Activated B cell treated with CpG ODN at 0.5 μM for 24 hours (primary cell): ENCODE measurements at regions of chr18 and their contacts with region 1.

Region 1: DNA sequence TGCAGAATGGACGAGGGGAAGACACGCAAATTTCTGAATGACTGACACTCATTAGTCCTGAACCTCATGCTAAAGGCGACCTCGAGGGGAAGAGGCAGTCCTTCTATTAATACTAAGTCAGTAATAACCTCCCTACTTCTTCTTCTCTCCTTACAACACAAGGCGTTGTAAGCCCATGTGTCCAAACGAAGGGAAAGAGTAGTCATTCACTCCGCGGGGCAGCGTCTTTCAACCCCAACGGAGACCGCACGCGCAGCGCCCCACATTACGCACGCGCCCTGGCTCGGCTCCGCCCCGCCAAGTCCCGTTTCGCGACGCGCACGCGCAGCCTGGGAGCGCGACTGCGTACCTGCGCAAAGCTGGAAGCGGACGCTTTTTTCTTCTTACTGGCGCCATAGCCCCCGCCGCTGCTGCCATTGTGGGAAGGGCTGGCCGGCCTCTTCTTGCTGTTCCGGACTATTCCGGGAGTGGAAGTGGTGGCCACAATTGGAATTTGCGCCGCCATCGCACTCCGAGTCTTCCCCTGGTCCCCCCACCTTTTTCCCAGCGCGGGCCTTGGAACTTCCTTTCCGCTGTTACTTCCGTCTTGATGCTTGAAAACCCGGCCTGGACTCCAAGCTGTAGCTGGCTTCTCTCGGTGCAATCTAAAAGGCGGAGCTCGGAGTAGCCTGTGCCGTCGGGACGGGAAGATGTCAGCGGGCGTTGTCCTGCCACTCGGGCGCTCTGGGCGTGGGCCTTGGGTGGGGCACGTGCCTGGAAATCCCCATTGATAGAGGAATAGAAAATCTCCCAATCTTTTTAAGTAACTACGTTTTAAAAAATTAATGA is at the start of gene INO80C:
- DNase-seq: peak; percentile 95
- ATAC-seq: peak; percentile 88
- H3K4me3 Mint-ChIP-seq: peak within 1 kb of the TSS; percentile 100
- H3K27ac Mint-ChIP-seq: peak within 1 kb of the TSS; percentile 100
- H3K4me1 Mint-ChIP-seq: peaks cover 51% of the 10 kb centered on the region
- H3K27me3 Mint-ChIP-seq: no peaks in the 10 kb centered on the region
- CTCF ChIP-seq: no peak
- total RNA-seq, gene INO80C: 31.6 and 35.9 TPM in 2 replicates

Region 2: GRCh38 chr18:35240664-35241447 is 256.7 kb before region 1 on chr18 and contains the start of gene ZNF397:
- CTCF ChIA-PET with region 1: no interaction called
- POLR2A ChIA-PET with region 1: interaction called, 8 read pairs
- intact Hi-C with region 1: loop called (anchors 1 kb)
- DNase-seq: peak; percentile 93
- ATAC-seq: peak; percentile 97
- H3K4me3 Mint-ChIP-seq: peak within 1 kb of the TSS; percentile 97
- H3K27ac Mint-ChIP-seq: peak within 1 kb of the TSS; percentile 98
- H3K4me1 Mint-ChIP-seq: peaks cover 22% of the 10 kb centered on the region
- H3K27me3 Mint-ChIP-seq: no peaks in the 10 kb centered on the region
- CTCF ChIP-seq: no peak
- total RNA-seq, gene ZNF397: 35.2 and 48.7 TPM in 2 replicates

Region 3: GRCh38 chr18:35343936-35344735 is 153.4 kb before region 1 on chr18 and contains the start of gene ZNF24:
- CTCF ChIA-PET with region 1: no interaction called
- POLR2A ChIA-PET with region 1: interaction called, 7 read pairs
- intact Hi-C with region 1: loop called (anchors 1 kb)
- DNase-seq: peak; percentile 92
- ATAC-seq: peak; percentile 83
- H3K4me3 Mint-ChIP-seq: peak within 1 kb of the TSS; percentile 98
- H3K27ac Mint-ChIP-seq: peak within 1 kb of the TSS; percentile 96
- H3K4me1 Mint-ChIP-seq: peaks cover 59% of the 10 kb centered on the region
- H3K27me3 Mint-ChIP-seq: no peaks in the 10 kb centered on the region
- CTCF ChIP-seq: no peak
- total RNA-seq, gene ZNF24: 72.5 and 75.8 TPM in 2 replicates

Region 4: DNA sequence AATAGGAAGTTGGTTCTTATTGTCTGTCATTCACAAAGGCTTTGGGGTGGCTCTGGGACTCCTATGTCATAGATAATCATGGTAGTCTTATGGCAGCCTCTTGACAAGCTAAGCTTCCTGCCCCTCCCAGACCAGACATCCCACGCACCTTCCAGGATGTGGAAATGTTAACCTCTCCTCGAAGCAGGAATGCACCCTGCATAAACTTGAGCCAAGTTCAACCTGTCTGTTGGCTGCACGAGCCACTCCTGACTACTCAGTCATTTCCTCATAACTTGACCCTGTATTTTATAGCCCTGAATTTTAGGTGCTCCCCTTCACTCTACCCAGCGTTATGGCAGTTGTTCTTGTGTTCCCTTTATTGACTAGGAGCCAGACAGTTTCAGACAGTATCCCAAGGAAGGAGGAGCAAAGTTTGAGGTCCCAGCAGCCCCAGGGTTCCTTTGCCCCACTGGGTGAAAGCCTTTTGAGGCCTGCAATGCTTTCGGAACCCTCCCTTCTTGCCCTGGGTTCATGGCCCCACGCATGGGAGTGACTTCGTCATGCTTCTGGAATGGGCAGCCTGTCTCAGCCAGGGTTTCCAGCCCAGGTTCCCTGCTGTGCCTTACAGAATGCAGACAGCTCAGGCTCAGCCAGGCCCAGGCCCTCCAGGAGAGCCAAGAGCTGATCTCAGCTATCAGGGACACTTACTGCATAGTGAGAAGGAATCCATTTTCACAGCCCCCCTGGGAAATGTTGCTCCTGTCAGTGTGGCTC is 15.8 kb after region 1 on chr18:
- CTCF ChIA-PET with region 1: interaction called, 4 read pairs
- POLR2A ChIA-PET with region 1: interaction called, 28 read pairs
- intact Hi-C with region 1: loop called (anchors 1 kb)
- DNase-seq: no peak
- ATAC-seq: no peak
- H3K4me3 Mint-ChIP-seq: no peak overlapping the region
- H3K27ac Mint-ChIP-seq: no peak overlapping the region
- H3K4me1 Mint-ChIP-seq: peaks cover 13% of the 10 kb centered on the region
- H3K27me3 Mint-ChIP-seq: no peaks in the 10 kb centered on the region
- CTCF ChIP-seq: no peak

Region 5: GRCh38 chr18:35616664-35617423 is 119.3 kb after region 1 on chr18:
- CTCF ChIA-PET with region 1: no interaction called
- POLR2A ChIA-PET with region 1: interaction called, 15 read pairs
- intact Hi-C with region 1: loop called (anchors 1 kb)
- DNase-seq: peak; percentile 24
- ATAC-seq: peak; percentile 93
- H3K4me3 Mint-ChIP-seq: no peak overlapping the region
- H3K27ac Mint-ChIP-seq: no peak overlapping the region
- H3K4me1 Mint-ChIP-seq: peaks cover 12% of the 10 kb centered on the region
- H3K27me3 Mint-ChIP-seq: no peaks in the 10 kb centered on the region
- CTCF ChIP-seq: no peak

Region 6: DNA sequence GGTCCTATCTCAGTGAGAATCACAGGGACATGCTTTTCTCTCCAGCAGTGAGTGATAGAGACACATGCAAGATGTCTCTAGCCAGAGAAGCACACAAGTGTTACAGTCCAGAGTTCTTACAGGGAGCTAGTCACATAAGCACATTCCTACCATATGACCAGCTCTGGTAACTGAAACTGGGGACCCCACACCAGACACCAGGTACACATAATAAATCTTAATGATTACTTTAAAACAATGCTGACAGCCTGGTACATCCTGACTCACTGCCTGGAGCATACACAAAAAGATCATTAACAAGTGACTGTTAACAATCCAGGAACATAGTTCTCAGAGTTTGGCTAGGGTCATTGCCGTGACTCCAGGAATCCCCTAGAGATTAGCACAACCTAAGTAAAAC is 137.6 kb after region 1 on chr18:
- CTCF ChIA-PET with region 1: no interaction called
- POLR2A ChIA-PET with region 1: no interaction called
- intact Hi-C with region 1: no loop called
- DNase-seq: no peak
- ATAC-seq: no peak
- H3K4me3 Mint-ChIP-seq: no peak overlapping the region
- H3K27ac Mint-ChIP-seq: no peak overlapping the region
- H3K4me1 Mint-ChIP-seq: peaks cover 6% of the 10 kb centered on the region
- H3K27me3 Mint-ChIP-seq: no peaks in the 10 kb centered on the region
- CTCF ChIP-seq: no peak

Region 7: DNA sequence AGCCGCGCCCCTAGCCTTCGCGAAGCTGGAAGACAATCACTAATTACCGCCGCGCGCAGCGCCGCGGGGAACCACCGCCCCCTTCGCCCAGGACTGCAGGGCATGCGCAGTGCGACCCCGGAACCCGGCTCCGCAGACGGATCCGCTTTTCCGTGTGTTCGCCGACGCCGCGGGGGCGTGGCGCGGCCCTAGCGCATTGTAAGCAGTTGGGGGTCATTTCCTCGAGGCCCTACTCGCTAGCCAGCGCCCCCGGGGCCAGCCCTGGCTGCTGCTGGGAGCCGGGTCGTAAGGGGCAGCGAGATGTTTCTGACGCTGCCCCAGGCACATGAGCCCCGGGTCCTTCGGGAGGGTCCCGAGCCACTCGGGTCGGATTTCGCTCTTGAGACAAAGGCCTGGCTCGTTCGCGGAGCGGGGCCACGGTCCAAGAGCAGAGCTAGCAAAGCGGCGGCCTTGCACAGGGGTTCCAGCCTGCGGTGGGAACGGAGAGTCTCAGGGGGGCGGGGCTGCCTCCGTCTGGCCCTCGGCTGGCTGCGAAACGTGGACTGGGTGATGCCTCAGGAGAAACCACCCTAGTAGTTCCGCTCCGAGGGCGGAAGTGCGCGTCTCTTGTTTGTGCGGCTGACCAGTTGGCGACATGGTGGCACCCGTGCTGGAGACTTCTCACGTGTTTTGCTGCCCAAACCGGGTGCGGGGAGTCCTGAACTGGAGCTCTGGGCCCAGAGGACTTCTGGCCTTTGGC is 631.9 kb after region 1 on chr18 and contains the starts of genes ELP2 and SLC39A6:
- CTCF ChIA-PET with region 1: no interaction called
- POLR2A ChIA-PET with region 1: interaction called, 7 read pairs
- intact Hi-C with region 1: loop called (anchors 1 kb)
- DNase-seq: peak; percentile 97
- ATAC-seq: peak; percentile 87
- H3K4me3 Mint-ChIP-seq: peak within 1 kb of the TSS; percentile 94
- H3K27ac Mint-ChIP-seq: peak within 1 kb of the TSS; percentile 92
- H3K4me1 Mint-ChIP-seq: peaks cover 57% of the 10 kb centered on the region
- H3K27me3 Mint-ChIP-seq: no peaks in the 10 kb centered on the region
- CTCF ChIP-seq: no peak
- total RNA-seq, gene ELP2: 105 and 124 TPM in 2 replicates
- total RNA-seq, gene SLC39A6: 17.6 and 18.6 TPM in 2 replicates